ENCODE measurements at regions of chr2 and their contacts with region 1.

Region 1: GRCh38 chr2:121810959-121811853 is 55.8 kb downstream of the TSN start:
- DNase-seq: peak; percentile 48
- H3K4me3 ChIP-seq: no peak overlapping the region
- H3K27ac ChIP-seq: no peak overlapping the region
- H3K4me1 ChIP-seq: no peaks in the 10 kb centered on the region
- H3K27me3 ChIP-seq: no peaks in the 10 kb centered on the region
- CTCF ChIP-seq: peak; percentile 57 to 69

Region 2: GRCh38 chr2:121888200-121888579 is 77.0 kb after region 1 on chr2:
- CTCF ChIA-PET with region 1: interaction called, 3 read pairs
- dilution Hi-C with region 1: no loop called
- in situ Hi-C with region 1: no loop called
- intact Hi-C with region 1: loop called (anchors 2 kb)
- DNase-seq: peak; percentile 75
- H3K4me3 ChIP-seq: no peak overlapping the region
- H3K27ac ChIP-seq: no peak overlapping the region
- H3K4me1 ChIP-seq: peaks cover 6% of the 10 kb centered on the region
- H3K27me3 ChIP-seq: peaks cover 14% of the 10 kb centered on the region
- CTCF ChIP-seq: peak; percentile 77 to 78

Region 3: GRCh38 chr2:121897335-121897970 is 86.2 kb after region 1 on chr2:
- CTCF ChIA-PET with region 1: no interaction called
- dilution Hi-C with region 1: no loop called
- in situ Hi-C with region 1: no loop called
- intact Hi-C with region 1: loop called (anchors 1 kb)
- DNase-seq: peak; percentile 17
- H3K4me3 ChIP-seq: no peak overlapping the region
- H3K27ac ChIP-seq: no peak overlapping the region
- H3K4me1 ChIP-seq: no peaks in the 10 kb centered on the region
- H3K27me3 ChIP-seq: peaks cover 6% of the 10 kb centered on the region
- CTCF ChIP-seq: peak; percentile 66 to 75

Region 4: GRCh38 chr2:122451040-122451439 is 639.8 kb after region 1 on chr2:
- CTCF ChIA-PET with region 1: no interaction called
- dilution Hi-C with region 1: no loop called
- in situ Hi-C with region 1: no loop called
- intact Hi-C with region 1: loop called (anchors 1 kb)
- DNase-seq: peak; percentile 42
- H3K4me3 ChIP-seq: no peak overlapping the region
- H3K27ac ChIP-seq: no peak overlapping the region
- H3K4me1 ChIP-seq: no peaks in the 10 kb centered on the region
- H3K27me3 ChIP-seq: no peaks in the 10 kb centered on the region
- CTCF ChIP-seq: peak; percentile 57 to 78